ENCODE measurements at regions of chr2 and their contacts with region 1.

Region 1: GRCh38 chr2:212686285-212686895 is 147.8 kb upstream of the ERBB4 start:
- DNase-seq: peak; percentile 46 to 87
- H3K4me3 ChIP-seq: no peak overlapping the region
- CTCF ChIP-seq: peak in 1 of 3 donors; percentile 13
- POLR2A ChIP-seq: no peak

Region 2: GRCh38 chr2:213151437-213152064 is 465.2 kb after region 1 on chr2 and contains the start of gene IKZF2:
- intact Hi-C with region 1: loop called (anchors 10 kb)
- DNase-seq: peak; percentile 76 to 92
- H3K4me3 ChIP-seq: peak within 1 kb of the TSS; percentile 58
- CTCF ChIP-seq: peak in 1 of 3 donors; percentile 6
- POLR2A ChIP-seq: no peak
- total RNA-seq, gene IKZF2: 37.4 to 69.3 (median 42.7) TPM